BJ (cell line): ENCODE measurements at regions of chr3 and their contacts with region 1.

Region 1: DNA sequence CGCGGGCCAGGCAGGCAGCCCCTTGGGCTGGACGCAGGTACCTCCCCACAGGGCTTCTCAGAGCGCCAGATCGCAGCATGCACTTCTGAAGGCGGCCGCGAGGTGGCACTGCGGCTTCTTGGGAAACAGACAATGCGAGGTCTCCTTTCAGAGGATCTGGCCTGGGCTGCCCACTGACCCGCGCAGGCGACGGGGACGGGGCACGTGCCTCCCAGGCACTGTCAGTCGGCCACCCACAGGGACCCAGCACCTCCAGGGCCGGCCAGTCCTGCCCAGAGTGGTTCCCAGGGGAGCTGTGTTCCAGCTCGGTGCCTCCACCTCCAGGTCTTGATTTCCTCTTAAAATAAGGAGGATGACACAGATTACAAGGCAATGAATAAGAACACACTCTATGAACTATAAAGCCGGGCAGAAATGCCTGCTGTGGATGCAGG is 24.4 kb upstream of the TXNRD3 start:
- DNase-seq: no peak
- H3K4me3 ChIP-seq: no peak overlapping the region
- H3K27me3 ChIP-seq: peaks cover 6% of the 10 kb centered on the region
- CTCF ChIP-seq: peak; percentile 97

Region 2: GRCh38 chr3:126258670-126259069 is 420.7 kb before region 1 on chr3:
- CTCF ChIA-PET with region 1: no interaction called
- POLR2A ChIA-PET with region 1: no interaction called
- DNase-seq: no peak
- H3K4me3 ChIP-seq: no peak overlapping the region
- H3K27me3 ChIP-seq: no peaks in the 10 kb centered on the region
- CTCF ChIP-seq: no peak

Region 3: GRCh38 chr3:126668450-126669401 is 10.6 kb before region 1 on chr3:
- CTCF ChIA-PET with region 1: interaction called, 16 read pairs
- POLR2A ChIA-PET with region 1: no interaction called
- DNase-seq: no peak
- H3K4me3 ChIP-seq: no peak overlapping the region
- H3K27me3 ChIP-seq: peaks cover 7% of the 10 kb centered on the region
- CTCF ChIP-seq: no peak

Region 4: GRCh38 chr3:126704463-126705214 is 25.3 kb after region 1 on chr3:
- CTCF ChIA-PET with region 1: interaction called, 12 read pairs
- POLR2A ChIA-PET with region 1: no interaction called
- DNase-seq: no peak
- H3K4me3 ChIP-seq: peak overlapping the region; percentile 88
- H3K27me3 ChIP-seq: no peaks in the 10 kb centered on the region; the same call in 1 of the 2 replicates
- CTCF ChIP-seq: no peak

Region 5: GRCh38 chr3:126807795-126808194 is 128.5 kb after region 1 on chr3:
- CTCF ChIA-PET with region 1: no interaction called
- POLR2A ChIA-PET with region 1: no interaction called
- DNase-seq: no peak
- H3K4me3 ChIP-seq: no peak overlapping the region
- H3K27me3 ChIP-seq: no peaks in the 10 kb centered on the region
- CTCF ChIP-seq: no peak

Region 6: GRCh38 chr3:127455541-127456450 is 776.5 kb after region 1 on chr3:
- CTCF ChIA-PET with region 1: interaction called, 57 read pairs
- POLR2A ChIA-PET with region 1: no interaction called
- DNase-seq: no peak
- H3K4me3 ChIP-seq: peak overlapping the region; percentile 27
- H3K27me3 ChIP-seq: peaks cover 11% of the 10 kb centered on the region
- CTCF ChIP-seq: peak; percentile 51